Ovary (tissue), 10 donors: ENCODE measurements at regions of chr6 and their contacts with region 1.

Region 1: DNA sequence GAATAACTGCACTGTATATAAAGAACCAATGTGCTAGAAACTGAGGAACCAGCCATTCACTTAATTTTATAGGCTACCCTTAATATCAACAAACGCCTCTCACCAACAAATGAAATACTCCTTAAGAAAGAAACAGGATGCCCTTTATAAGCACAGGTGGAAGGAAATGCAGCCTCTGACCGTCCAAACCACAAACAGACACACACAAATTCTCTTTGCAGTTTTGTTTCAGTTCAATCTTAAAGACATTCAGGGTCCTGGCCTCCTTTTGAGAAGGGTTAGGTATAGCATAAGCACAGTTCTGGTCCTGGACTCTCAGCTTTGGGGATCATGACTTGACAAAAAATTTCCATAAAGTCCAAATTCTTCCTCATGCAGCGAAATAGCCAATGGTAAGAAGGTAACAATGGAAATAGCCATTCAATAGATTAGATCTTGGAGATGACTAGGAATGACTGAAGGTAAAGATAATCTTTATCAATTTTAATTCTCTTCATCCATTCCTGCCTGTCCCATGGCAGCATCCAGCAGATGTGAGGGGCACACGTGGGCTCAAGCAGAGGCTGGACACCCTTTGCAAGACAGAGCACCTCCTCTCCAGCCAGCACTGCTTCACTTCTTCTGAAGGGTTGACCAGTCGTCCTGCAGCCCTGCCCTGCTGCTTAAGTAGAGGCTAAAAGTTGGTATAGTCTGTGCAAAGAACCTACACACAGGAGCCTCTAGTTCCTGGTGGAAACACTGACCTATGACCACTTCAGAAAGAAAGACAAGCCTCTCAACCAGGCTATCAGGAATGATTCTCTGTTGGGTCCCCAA is 123.9 kb downstream of the CD83 start:
- DNase-seq: no peak
- H3K4me3 ChIP-seq: no peak overlapping the region
- H3K27ac ChIP-seq: no peak overlapping the region
- H3K4me1 ChIP-seq: no peaks in the 10 kb centered on the region
- H3K27me3 ChIP-seq: no peaks in the 10 kb centered on the region
- CTCF ChIP-seq: no peak
- EP300 ChIP-seq: no peak
- POLR2A ChIP-seq: no peak

Region 2: GRCh38 chr6:13985663-13986325 is 255.7 kb before region 1 on chr6:
- intact Hi-C with region 1: no loop called
- DNase-seq: no peak
- H3K4me3 ChIP-seq: no peak overlapping the region
- H3K27ac ChIP-seq: no peak overlapping the region
- H3K4me1 ChIP-seq: no peaks in the 10 kb centered on the region
- H3K27me3 ChIP-seq: no peaks in the 10 kb centered on the region
- CTCF ChIP-seq: no peak
- EP300 ChIP-seq: no peak
- POLR2A ChIP-seq: no peak

Region 3: DNA sequence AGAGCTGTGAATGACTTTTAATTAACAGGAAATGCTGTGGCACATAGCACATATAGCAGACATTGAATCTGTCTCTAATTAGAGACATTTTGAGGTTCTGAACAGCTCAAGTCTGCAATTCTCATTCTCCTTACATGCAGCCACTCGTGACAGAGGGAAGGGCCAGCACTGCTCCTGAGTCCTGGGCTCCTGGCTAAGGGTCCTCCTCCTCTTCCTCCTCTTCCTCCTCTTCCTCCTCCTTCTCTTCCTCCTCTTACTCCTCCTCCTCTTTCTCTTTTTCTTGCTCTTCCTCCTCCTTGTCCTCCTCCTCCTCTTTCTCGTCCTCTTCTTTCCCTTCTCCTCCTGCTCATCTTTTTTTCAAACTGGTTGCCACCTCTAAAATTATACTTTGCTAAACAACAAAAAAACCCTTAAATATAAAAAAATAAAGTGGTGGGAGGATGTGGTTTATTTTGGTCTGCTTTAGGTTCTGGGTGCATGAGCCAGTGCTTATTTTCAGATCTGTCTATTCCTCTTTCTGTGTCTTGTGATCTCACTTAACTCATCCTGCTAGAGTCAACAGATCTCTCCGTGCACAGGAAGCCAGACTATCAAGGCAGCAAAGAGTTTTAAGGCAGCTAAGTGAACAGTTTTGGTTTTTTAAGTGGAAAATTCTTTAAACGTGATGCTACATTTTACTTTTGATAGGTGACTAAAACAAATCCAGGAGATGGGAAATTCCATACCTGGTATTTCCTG is 35.4 kb after region 1 on chr6:
- intact Hi-C with region 1: loop called in 1 of 4 experiments (anchors 1 kb)
- DNase-seq: no peak
- H3K4me3 ChIP-seq: no peak overlapping the region
- H3K27ac ChIP-seq: no peak overlapping the region
- H3K4me1 ChIP-seq: peaks cover 16% of the 10 kb centered on the region
- H3K27me3 ChIP-seq: no peaks in the 10 kb centered on the region
- CTCF ChIP-seq: no peak
- EP300 ChIP-seq: no peak
- POLR2A ChIP-seq: no peak